ENCODE measurements at regions of chr17 and their contacts with region 1.

Region 1: GRCh38 chr17:43483674-43484372 is at the start of gene DHX8:
- DNase-seq: peak; percentile 99
- ATAC-seq: peak; percentile 98
- H3K4me3 ChIP-seq: peak within 1 kb of the TSS; percentile 84 to 99 (median 98)
- H3K4me3 Mint-ChIP-seq: peak within 1 kb of the TSS; percentile 100
- H3K27ac ChIP-seq: peak within 1 kb of the TSS; percentile 82 to 86
- H3K27ac Mint-ChIP-seq: peak within 1 kb of the TSS; percentile 98
- H3K4me1 ChIP-seq: peaks cover 17 to 23% of the 10 kb centered on the region in 2 donors
- H3K4me1 Mint-ChIP-seq: peaks cover 29% of the 10 kb centered on the region
- H3K27me3 ChIP-seq: no peaks in the 10 kb centered on the region
- H3K27me3 Mint-ChIP-seq: no peaks in the 10 kb centered on the region
- CTCF ChIP-seq: peak; percentile 100
- total RNA-seq, gene DHX8: 63.3 and 64.4 TPM in 2 replicates

Region 2: GRCh38 chr17:43125133-43125966 is 358.5 kb before region 1 on chr17 and contains the start of gene BRCA1:
- CTCF ChIA-PET with region 1: no interaction called
- POLR2A ChIA-PET with region 1: no interaction called
- intact Hi-C with region 1: loop called (anchors 2 kb)
- DNase-seq: peak; percentile 98
- ATAC-seq: peak; percentile 100
- H3K4me3 ChIP-seq: peak within 1 kb of the TSS; percentile 68 to 97 (median 92)
- H3K4me3 Mint-ChIP-seq: peak within 1 kb of the TSS; percentile 91
- H3K27ac ChIP-seq: peak within 1 kb of the TSS; percentile 60 to 82
- H3K27ac Mint-ChIP-seq: peak within 1 kb of the TSS; percentile 91
- H3K4me1 ChIP-seq: peaks cover 12 to 24% of the 10 kb centered on the region in 2 donors
- H3K4me1 Mint-ChIP-seq: peaks cover 31% of the 10 kb centered on the region
- H3K27me3 ChIP-seq: no peaks in the 10 kb centered on the region
- H3K27me3 Mint-ChIP-seq: no peaks in the 10 kb centered on the region
- CTCF ChIP-seq: no peak
- total RNA-seq, gene BRCA1: 7.2 and 9.0 TPM in 2 replicates

Region 3: DNA sequence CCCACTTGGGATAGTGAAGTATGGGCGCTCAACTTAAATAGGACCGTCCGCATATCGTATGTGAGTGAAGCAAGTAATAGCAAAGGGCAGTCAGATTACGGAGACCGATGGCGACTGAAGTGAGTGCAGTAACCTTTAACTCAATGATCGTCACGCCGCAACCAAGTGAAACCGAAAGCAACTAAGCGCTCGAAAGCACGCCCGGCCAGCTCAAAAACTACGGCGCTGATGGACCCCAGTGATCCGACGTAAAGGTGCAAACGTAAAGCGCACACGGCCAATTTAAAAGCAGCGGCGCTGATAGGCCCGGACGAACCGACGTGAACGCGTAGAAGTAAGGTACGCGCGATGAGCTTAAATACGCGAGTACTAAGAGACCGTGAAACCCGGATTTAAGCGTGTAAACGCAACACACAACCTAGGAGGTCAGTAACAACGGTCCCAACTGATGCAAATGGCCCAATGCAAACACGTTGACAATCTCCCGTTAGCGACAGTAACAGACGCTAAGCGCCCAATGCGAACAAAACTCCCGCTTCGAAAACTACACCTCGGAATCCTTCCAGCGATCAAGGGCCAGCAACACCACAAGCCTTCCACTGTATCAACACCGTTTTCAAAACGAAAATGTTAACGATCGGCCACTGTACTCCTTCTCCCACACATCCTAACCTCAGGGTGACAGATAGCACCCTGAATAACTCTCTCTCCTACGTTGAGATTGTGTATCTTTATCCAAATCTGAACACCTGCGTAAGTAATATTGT is 122.9 kb before region 1 on chr17:
- CTCF ChIA-PET with region 1: interaction called, 16 read pairs
- POLR2A ChIA-PET with region 1: interaction called, 19 read pairs
- intact Hi-C with region 1: loop called (anchors 2 kb)
- DNase-seq: peak; percentile 94
- ATAC-seq: peak; percentile 80
- H3K4me3 ChIP-seq: peak overlapping the region; percentile 61 to 88 (median 70)
- H3K4me3 Mint-ChIP-seq: peak overlapping the region; percentile 96
- H3K27ac ChIP-seq: peak overlapping the region; percentile 97 to 99
- H3K27ac Mint-ChIP-seq: peak overlapping the region; percentile 100
- H3K4me1 ChIP-seq: peaks cover 9 to 15% of the 10 kb centered on the region in 2 donors
- H3K4me1 Mint-ChIP-seq: peaks cover 21% of the 10 kb centered on the region
- H3K27me3 ChIP-seq: no peaks in the 10 kb centered on the region
- H3K27me3 Mint-ChIP-seq: no peaks in the 10 kb centered on the region
- CTCF ChIP-seq: no peak

Region 4: DNA sequence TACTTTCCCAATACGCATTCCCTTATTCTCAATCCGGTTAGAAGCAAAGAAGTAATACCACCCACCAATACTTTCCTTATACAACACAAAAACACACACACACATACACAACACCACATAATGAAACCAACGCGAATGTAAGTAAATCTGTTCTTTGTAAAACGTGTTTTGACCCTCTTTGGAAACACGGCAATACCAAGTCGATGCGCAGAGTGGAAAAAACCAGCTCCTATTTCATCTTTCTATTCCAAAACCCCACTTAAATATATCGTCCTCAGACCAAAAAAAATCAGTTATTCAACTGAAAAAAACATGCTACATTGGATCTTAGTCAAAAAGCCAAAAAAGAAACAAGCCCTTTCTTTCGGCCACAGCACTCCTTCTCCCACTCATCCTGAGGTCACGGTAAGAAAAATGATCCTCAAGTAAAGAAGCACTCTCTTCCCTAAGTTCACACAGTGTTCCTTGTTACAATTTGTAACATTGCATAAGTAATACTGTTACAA is 116.0 kb before region 1 on chr17:
- CTCF ChIA-PET with region 1: interaction called, 13 read pairs
- POLR2A ChIA-PET with region 1: interaction called, 33 read pairs
- intact Hi-C with region 1: no loop called
- DNase-seq: no peak
- ATAC-seq: peak; percentile 40
- H3K4me3 ChIP-seq: peak overlapping the region; percentile 59 to 84 (median 64)
- H3K4me3 Mint-ChIP-seq: peak overlapping the region; percentile 99
- H3K27ac ChIP-seq: peak overlapping the region; percentile 96 to 98
- H3K27ac Mint-ChIP-seq: peak overlapping the region; percentile 100
- H3K4me1 ChIP-seq: peaks cover 33 to 50% of the 10 kb centered on the region in 2 donors
- H3K4me1 Mint-ChIP-seq: peaks cover 44% of the 10 kb centered on the region
- H3K27me3 ChIP-seq: no peaks in the 10 kb centered on the region
- H3K27me3 Mint-ChIP-seq: no peaks in the 10 kb centered on the region
- CTCF ChIP-seq: no peak

Region 5: GRCh38 chr17:43393944-43394482 is 89.8 kb before region 1 on chr17:
- CTCF ChIA-PET with region 1: interaction called, 218 read pairs
- POLR2A ChIA-PET with region 1: interaction called, 18 read pairs
- intact Hi-C with region 1: loop called (anchors 1 kb)
- DNase-seq: peak; percentile 90
- ATAC-seq: peak; percentile 22
- H3K4me3 ChIP-seq: no peak overlapping the region
- H3K4me3 Mint-ChIP-seq: no peak overlapping the region
- H3K27ac ChIP-seq: no peak overlapping the region
- H3K27ac Mint-ChIP-seq: no peak overlapping the region
- H3K4me1 ChIP-seq: peaks cover 24 to 50% of the 10 kb centered on the region in 2 donors
- H3K4me1 Mint-ChIP-seq: peaks cover 43% of the 10 kb centered on the region
- H3K27me3 ChIP-seq: no peaks in the 10 kb centered on the region
- H3K27me3 Mint-ChIP-seq: no peaks in the 10 kb centered on the region
- CTCF ChIP-seq: peak; percentile 87

Region 6: GRCh38 chr17:44006598-44007345 is 522.9 kb after region 1 on chr17:
- CTCF ChIA-PET with region 1: no interaction called
- POLR2A ChIA-PET with region 1: no interaction called
- intact Hi-C with region 1: loop called (anchors 2 kb)
- DNase-seq: peak; percentile 96
- ATAC-seq: peak; percentile 91
- H3K4me3 ChIP-seq: peak overlapping the region; percentile 53 to 84 (median 77)
- H3K4me3 Mint-ChIP-seq: peak overlapping the region; percentile 95
- H3K27ac ChIP-seq: peak overlapping the region in 1 of 2 donors; percentile 33
- H3K27ac Mint-ChIP-seq: peak overlapping the region; percentile 68
- H3K4me1 ChIP-seq: peaks cover 37 to 42% of the 10 kb centered on the region in 2 donors
- H3K4me1 Mint-ChIP-seq: peaks cover 33% of the 10 kb centered on the region
- H3K27me3 ChIP-seq: peaks cover 0 to 28% (median 11%) of the 10 kb centered on the region in 4 experiments
- H3K27me3 Mint-ChIP-seq: peaks cover 13% of the 10 kb centered on the region
- CTCF ChIP-seq: peak; percentile 69